ENCODE measurements at regions of chr7 and their contacts with region 1.

Region 1: DNA sequence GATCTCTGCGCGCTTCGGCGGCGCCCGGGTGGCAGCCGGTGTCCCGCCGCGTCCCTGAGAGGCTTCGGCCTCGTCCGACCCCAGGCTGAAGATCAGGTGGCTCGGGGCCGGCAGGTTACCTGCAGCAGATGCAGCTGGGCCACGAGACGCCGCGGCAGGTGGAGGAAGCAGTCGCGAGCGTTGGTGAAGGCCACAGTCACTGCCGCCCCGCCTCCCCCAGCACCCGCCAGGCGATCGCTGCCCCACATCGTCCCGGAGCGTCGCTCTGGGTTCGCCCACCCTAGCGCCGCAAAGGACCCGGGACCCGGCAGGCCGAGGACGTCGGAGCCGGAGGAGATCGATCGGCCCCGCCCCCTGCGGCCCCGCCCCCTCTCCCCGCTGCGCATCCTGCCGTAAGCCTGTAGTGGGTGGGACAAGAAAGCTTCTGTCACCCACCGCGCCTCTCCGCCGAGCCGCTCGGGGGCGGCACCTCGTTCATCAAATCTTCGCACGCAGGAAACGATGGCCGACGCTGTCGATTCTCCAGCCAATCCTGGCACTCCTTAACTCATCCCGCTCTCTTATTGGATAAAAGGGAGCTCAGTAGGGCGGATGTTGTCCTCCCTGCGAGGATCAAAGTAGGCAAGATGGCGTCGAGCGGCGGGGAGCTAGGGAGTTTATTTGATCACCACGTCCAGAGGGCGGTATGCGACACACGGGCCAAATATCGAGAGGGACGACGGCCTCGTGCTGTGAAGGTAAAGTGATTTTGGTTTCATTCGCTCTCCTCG is at the starts of genes PEX1 and RBM48:
- DNase-seq: peak; percentile 99
- H3K4me3 Mint-ChIP-seq: peak within 1 kb of the TSS; percentile 98
- H3K27ac Mint-ChIP-seq: peak within 1 kb of the TSS; percentile 99
- H3K4me1 Mint-ChIP-seq: peaks cover 16% of the 10 kb centered on the region
- H3K27me3 Mint-ChIP-seq: no peaks in the 10 kb centered on the region
- CTCF ChIP-seq: no peak
- total RNA-seq, gene PEX1: 12.4 and 12.6 TPM in 2 replicates
- total RNA-seq, gene RBM48: 10.4 and 10.7 TPM in 2 replicates

Region 2: DNA sequence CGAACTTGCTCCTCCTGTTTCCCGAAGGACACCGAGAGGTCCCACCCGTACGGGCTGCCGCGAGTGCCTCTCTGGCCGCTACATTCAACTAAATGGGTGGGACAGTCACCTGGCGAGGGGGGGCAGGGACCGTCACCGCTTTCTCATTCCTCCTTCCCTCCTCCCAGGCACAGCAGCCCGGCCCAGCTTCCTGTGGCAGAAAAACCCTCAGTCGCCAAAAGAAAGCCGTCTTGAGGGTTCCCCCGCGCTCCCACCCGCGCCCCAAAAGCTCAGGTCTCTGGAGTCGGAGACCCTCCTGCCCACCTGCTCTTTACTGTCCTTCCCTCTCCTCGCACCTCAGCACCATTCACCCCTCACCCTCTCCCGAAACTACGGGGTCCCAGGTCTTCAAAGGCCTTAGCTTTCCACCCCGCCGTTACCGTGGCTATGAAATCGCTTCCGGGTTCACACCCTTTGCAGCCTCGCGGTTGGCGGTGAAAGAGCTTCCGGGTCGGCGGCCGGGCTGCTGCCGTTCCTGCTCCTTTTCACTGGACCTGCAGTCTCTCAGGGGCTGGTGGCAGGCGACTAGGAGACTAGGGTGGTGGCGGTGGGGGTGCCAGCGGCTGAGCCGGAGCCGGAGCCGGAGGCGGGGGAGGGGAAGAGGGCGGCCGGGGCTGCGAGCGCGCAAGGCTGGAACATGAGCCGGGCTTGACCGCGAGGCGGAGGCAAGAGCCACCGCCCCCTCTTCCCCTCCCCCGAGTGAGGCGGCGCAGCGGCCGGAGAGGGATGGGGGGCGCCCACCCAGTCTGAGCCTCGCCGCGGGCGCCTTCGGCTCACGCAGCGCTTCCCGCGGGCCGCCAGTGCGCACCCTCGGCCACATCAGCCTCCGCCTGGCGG is 282.6 kb before region 1 on chr7 and contains the starts of genes ANKIB1 and KRIT1:
- CTCF ChIA-PET with region 1: no interaction called
- POLR2A ChIA-PET with region 1: interaction called, 13 read pairs
- intact Hi-C with region 1: no loop called
- DNase-seq: peak; percentile 83
- H3K4me3 Mint-ChIP-seq: peak within 1 kb of the TSS; percentile 89
- H3K27ac Mint-ChIP-seq: peak within 1 kb of the TSS; percentile 98
- H3K4me1 Mint-ChIP-seq: peaks cover 29% of the 10 kb centered on the region
- H3K27me3 Mint-ChIP-seq: no peaks in the 10 kb centered on the region
- CTCF ChIP-seq: no peak
- total RNA-seq, gene ANKIB1: 33.0 and 40.1 TPM in 2 replicates
- total RNA-seq, gene KRIT1: 38.9 and 41.3 TPM in 2 replicates

Region 3: GRCh38 chr7:92366730-92367129 is 161.6 kb before region 1 on chr7:
- CTCF ChIA-PET with region 1: no interaction called
- POLR2A ChIA-PET with region 1: no interaction called
- intact Hi-C with region 1: no loop called
- DNase-seq: no peak
- H3K4me3 Mint-ChIP-seq: no peak overlapping the region
- H3K27ac Mint-ChIP-seq: no peak overlapping the region
- H3K4me1 Mint-ChIP-seq: peaks cover 9% of the 10 kb centered on the region
- H3K27me3 Mint-ChIP-seq: no peaks in the 10 kb centered on the region
- CTCF ChIP-seq: no peak

Region 4: GRCh38 chr7:92547579-92547978 is 19.2 kb after region 1 on chr7:
- CTCF ChIA-PET with region 1: interaction called, 3 read pairs
- POLR2A ChIA-PET with region 1: interaction called, 10 read pairs
- intact Hi-C with region 1: no loop called
- DNase-seq: no peak
- H3K4me3 Mint-ChIP-seq: no peak overlapping the region
- H3K27ac Mint-ChIP-seq: no peak overlapping the region
- H3K4me1 Mint-ChIP-seq: no peaks in the 10 kb centered on the region
- H3K27me3 Mint-ChIP-seq: no peaks in the 10 kb centered on the region
- CTCF ChIP-seq: no peak

Region 5: DNA sequence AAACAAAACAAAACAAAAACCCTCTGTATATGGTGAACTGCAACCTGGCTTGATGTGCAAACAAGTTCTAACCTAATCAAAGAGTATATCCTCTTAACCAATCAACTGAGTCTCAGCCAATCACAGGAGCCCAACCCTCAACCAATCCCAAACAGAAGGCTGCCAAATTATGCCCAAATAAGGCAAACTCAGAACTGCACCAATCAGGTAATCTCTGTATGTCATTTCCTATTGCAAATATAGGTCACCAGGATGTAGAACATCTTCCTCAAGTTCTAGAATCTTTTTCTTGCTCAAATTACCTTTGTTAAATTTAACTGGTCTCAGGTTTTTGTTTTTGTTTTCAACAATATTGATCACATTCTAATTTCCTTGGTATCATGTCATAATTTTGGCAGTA is 56.6 kb after region 1 on chr7:
- CTCF ChIA-PET with region 1: interaction called, 3 read pairs
- POLR2A ChIA-PET with region 1: interaction called, 11 read pairs
- intact Hi-C with region 1: loop called (anchors 5 kb)
- DNase-seq: no peak
- H3K4me3 Mint-ChIP-seq: no peak overlapping the region
- H3K27ac Mint-ChIP-seq: no peak overlapping the region
- H3K4me1 Mint-ChIP-seq: peaks cover 20% of the 10 kb centered on the region
- H3K27me3 Mint-ChIP-seq: no peaks in the 10 kb centered on the region
- CTCF ChIP-seq: no peak

Region 6: DNA sequence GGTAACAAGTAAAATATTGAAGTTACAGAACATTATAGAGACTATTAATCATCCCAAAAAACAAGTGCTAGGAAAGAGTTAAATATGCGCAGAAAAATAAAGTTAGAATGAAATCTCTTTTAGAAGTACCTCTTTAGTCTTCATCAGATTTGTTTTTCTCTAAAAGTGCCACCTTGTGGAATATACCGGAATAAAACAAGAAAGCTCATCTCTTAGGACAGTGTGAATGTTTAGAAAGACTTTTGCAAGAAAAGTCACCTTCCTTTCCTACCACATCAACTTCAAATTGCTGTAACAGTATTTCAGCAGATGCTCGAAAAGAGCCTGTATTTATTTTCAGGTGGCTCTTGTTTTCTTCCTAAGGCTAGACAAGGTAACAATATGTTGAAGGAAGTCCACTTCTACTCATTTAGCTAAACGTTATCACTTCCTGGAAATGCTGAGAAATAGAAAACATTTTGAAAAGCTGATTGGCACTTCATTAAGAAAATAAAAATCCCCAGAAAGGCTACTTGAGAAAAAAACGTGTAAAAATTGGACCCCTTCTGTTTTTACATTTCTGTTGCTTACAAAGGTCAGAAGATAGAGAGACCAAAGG is 81.6 kb after region 1 on chr7:
- CTCF ChIA-PET with region 1: interaction called, 5 read pairs
- POLR2A ChIA-PET with region 1: no interaction called
- intact Hi-C with region 1: loop called (anchors 5 kb)
- DNase-seq: peak; percentile 36
- H3K4me3 Mint-ChIP-seq: no peak overlapping the region
- H3K27ac Mint-ChIP-seq: no peak overlapping the region
- H3K4me1 Mint-ChIP-seq: no peaks in the 10 kb centered on the region
- H3K27me3 Mint-ChIP-seq: no peaks in the 10 kb centered on the region
- CTCF ChIP-seq: peak; percentile 38